PC-3 (cell line): ENCODE measurements at regions of chr21 and their contacts with region 1.

Region 1: DNA sequence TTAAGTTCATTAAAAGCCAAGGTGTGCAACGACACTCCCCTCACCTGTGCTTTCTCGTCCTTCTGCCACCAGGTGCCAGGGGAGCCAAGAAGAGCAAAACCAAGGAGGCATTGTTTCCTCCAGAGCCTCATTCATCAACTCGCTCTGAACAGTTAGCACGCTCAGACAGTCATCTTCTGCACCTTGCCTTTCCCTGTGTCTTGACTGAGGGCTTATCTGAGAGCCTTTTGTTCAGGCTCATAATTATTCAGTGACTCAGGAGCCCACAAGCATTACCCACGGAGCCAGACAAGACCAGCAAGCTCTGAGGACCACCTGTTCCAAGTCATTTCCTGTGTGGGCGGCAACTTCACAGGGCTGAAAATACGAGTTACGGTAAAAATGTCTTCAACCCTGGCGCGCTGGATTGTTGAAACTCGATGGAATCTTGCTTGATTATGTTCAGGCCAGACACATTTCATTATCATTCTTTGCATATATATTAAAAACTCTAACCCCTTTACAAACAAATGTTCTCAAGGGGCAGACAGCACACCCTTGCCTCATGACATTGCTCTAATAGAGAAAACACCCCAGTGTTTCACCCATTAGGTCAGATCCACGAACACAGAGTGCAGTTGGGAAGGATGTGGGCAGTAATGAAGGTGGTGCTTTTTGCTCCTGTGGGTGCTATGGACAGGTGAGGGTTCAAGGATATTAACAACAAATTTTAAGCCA is 89.7 kb upstream of the RUNX1 start:
- DNase-seq: peak; percentile 94
- ATAC-seq: peak; percentile 58
- H3K4me3 ChIP-seq: peak overlapping the region; percentile 16; the same call in 1 of the 2 replicates
- H3K27ac ChIP-seq: peak overlapping the region; percentile 87
- H3K4me1 ChIP-seq: peaks cover 42% of the 10 kb centered on the region
- H3K27me3 ChIP-seq: no peaks in the 10 kb centered on the region
- CTCF ChIP-seq: no peak; the same call in 1 of the 2 replicates

Region 2: DNA sequence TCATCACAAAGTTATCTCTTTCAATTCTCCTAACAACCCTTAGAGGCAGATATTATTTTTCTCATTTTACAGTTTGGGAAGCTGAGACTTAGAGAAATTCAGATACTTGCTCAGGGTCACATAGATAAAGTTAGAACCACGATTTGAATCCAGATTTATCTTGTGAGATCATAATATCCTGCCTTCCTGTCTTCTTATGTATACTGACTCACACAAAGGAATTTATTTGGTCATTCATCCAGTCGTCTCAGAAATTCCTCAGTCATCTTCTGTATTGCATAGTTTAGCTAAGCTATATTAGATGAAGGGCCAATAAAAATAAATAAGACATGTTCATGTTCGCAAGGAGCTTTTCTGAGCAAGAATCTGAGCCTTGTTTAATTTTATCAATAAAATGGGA is 54.0 kb before region 1 on chr21:
- CTCF ChIA-PET with region 1: no interaction called
- POLR2A ChIA-PET with region 1: no interaction called
- intact Hi-C with region 1: loop called (anchors 5 kb)
- DNase-seq: peak; percentile 95
- ATAC-seq: peak; percentile 82
- H3K4me3 ChIP-seq: no peak overlapping the region
- H3K27ac ChIP-seq: peak overlapping the region; percentile 71
- H3K4me1 ChIP-seq: peaks cover 49% of the 10 kb centered on the region
- H3K27me3 ChIP-seq: no peaks in the 10 kb centered on the region
- CTCF ChIP-seq: no peak

Region 3: GRCh38 chr21:35120631-35121186 is 18.1 kb before region 1 on chr21:
- CTCF ChIA-PET with region 1: interaction called, 10 read pairs
- POLR2A ChIA-PET with region 1: interaction called, 3 read pairs
- intact Hi-C with region 1: no loop called
- DNase-seq: no peak
- ATAC-seq: no peak
- H3K4me3 ChIP-seq: no peak overlapping the region
- H3K27ac ChIP-seq: no peak overlapping the region
- H3K4me1 ChIP-seq: no peaks in the 10 kb centered on the region
- H3K27me3 ChIP-seq: no peaks in the 10 kb centered on the region
- CTCF ChIP-seq: no peak

Region 4: GRCh38 chr21:35256467-35256988 is 117.7 kb after region 1 on chr21:
- CTCF ChIA-PET with region 1: interaction called, 3 read pairs
- POLR2A ChIA-PET with region 1: no interaction called
- intact Hi-C with region 1: loop called (anchors 5 kb)
- DNase-seq: peak; percentile 98
- ATAC-seq: peak; percentile 87
- H3K4me3 ChIP-seq: peak overlapping the region; percentile 58
- H3K27ac ChIP-seq: peak overlapping the region; percentile 92
- H3K4me1 ChIP-seq: peaks cover 58% of the 10 kb centered on the region
- H3K27me3 ChIP-seq: no peaks in the 10 kb centered on the region
- CTCF ChIP-seq: no peak